ENCODE measurements at regions of chr18 and their contacts with region 1.

Region 1: GRCh38 chr18:59049721-59050660 is 89.7 kb upstream of the SEC11C start:
- DNase-seq: no peak
- H3K4me3 ChIP-seq: no peak overlapping the region
- H3K27ac ChIP-seq: no peak overlapping the region
- H3K4me1 ChIP-seq: no peaks in the 10 kb centered on the region
- H3K27me3 ChIP-seq: no peaks in the 10 kb centered on the region
- CTCF ChIP-seq: no peak
- POLR2A ChIP-seq: no peak

Region 2: GRCh38 chr18:58723810-58724595 is 326.0 kb before region 1 on chr18:
- intact Hi-C with region 1: loop called (anchors 5 kb)
- DNase-seq: no peak
- H3K4me3 ChIP-seq: no peak overlapping the region
- H3K27ac ChIP-seq: no peak overlapping the region
- H3K4me1 ChIP-seq: no peaks in the 10 kb centered on the region
- H3K27me3 ChIP-seq: no peaks in the 10 kb centered on the region
- CTCF ChIP-seq: no peak
- POLR2A ChIP-seq: no peak

Region 3: DNA sequence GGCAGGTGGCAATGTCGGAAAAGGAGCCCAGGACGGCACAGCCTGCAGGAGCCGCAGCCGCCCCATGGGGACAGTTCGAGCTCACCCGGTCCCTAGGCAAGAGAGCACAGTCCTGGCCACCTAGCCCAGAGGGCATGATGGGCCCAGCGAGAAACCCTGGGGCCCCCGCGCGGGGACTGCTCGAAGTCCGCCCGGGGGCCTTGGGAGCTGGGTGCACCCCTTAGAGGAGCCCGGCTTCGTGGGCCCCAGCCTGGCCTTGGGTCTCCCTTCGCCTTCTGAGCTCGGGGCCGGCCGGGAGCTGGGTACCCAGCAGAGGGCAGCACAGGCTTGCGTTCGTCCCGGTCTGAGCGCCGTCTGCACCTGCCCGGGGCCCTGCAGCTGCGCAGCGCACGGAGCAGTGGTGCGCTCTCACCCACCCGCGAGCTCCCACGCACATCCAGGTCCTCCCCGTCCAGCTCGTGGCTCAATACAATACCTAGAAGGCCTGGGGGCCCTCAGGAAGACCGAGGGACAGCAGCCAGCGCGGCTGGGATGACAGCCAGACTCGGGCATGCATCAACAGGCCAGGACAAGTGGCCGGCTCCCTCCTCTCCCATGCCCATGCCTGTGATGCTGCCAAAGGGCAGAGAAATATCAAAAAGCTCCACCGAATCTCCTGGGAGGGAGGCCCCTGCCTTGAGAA is 281.6 kb before region 1 on chr18:
- intact Hi-C with region 1: no loop called
- DNase-seq: peak; percentile 77 to 78
- H3K4me3 ChIP-seq: peak overlapping the region; percentile 1 to 59 (median 23)
- H3K27ac ChIP-seq: peak overlapping the region in 1 of 2 donors; percentile 9
- H3K4me1 ChIP-seq: no peaks in the 10 kb centered on the region
- H3K27me3 ChIP-seq: peaks cover 0 to 14% of the 10 kb centered on the region in 2 donors
- CTCF ChIP-seq: peak in 2 of 3 donors; percentile 71 to 72
- POLR2A ChIP-seq: no peak

Measured in breast epithelium (tissue), 4 donors.